ENCODE measurements at regions of chr17 and their contacts with region 1.

Region 1: DNA sequence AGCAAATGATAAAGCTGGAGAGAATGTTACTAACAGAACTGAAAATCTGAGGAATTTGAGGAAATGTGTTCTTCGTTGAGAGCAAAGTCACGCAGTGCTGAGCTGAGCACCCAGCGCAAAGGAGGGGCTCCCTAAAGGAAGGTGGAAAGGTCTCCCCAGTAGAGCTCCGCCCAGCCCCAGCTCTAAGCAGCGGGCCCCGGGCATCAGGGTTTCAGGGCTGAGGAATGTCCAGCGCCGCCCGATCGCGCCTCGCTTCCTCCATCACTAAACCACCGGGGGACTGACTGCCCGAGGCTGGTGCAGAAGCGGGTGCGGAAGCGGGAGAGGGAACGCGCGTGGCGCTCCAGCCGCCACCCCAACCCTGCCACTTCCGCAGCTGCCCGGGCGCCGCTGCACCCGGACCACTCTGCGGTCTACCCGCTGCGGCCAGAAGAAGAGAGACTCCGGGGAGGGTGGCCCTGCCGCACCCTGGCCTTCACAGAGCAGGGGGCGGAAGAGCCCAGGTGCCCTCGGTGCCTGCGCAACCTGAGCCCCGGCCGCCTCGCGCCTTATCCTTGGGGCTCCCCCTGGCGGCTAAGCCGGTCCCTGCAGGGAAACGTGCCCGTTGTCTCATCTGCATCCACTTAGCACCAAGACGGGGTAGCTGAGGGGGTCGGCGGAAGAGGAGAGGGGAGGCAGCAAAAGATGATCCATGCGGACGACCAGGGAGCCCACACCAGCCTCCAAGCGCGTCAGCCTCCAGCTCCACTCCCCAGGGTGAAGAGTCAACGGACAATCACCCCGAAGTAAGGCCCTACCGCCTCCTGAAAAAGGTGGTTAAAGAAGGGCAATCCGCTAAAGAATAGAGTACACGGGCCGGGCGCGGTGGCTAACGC is 12.4 kb upstream of the GUCY2D start:
- DNase-seq: peak; percentile 84
- H3K27ac ChIP-seq: peak overlapping the region; percentile 57
- CTCF ChIP-seq: peak; percentile 94

Region 2: DNA sequence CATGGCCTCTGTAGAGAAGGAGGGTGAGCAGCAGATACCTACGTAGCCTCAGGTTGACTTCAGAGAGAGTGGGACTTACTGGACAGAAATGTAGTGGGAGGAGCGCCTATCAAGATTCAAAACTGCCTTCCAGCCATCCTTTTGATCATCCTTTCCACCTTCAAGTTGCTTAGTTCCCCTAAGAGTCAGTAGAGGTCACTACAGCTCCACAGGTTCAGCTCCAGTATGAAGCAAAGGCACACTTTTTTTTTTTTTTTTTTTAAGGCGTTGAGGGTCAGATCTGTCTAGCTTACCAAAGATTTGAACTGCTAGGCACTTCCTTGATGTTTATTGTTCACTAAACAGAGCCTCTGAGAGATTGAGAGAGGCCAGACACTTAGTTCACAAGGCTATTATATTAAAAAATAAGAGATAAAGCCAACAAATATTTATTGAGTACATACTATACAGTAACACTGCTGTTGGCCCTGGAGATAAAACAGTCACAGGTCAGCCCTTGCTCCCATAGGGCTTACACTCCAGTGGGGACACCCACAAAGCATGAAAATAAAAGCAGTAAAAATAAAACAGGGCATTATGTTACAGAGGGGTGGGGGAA is 77.0 kb before region 1 on chr17:
- CTCF ChIA-PET with region 1: interaction called, 31 read pairs
- POLR2A ChIA-PET with region 1: interaction called, 4 read pairs
- DNase-seq: peak; percentile 61
- H3K27ac ChIP-seq: no peak overlapping the region
- CTCF ChIP-seq: peak; percentile 79

Region 3: GRCh38 chr17:7931709-7932482 is 58.1 kb before region 1 on chr17 and contains the starts of genes CNTROB and TRAPPC1:
- CTCF ChIA-PET with region 1: interaction called, 22 read pairs
- POLR2A ChIA-PET with region 1: interaction called, 4 read pairs
- DNase-seq: peak; percentile 99
- H3K27ac ChIP-seq: peak within 1 kb of the TSS; percentile 80
- CTCF ChIP-seq: no peak

Region 4: GRCh38 chr17:7977805-7978204 is 12.2 kb before region 1 on chr17:
- CTCF ChIA-PET with region 1: interaction called, 11 read pairs
- POLR2A ChIA-PET with region 1: no interaction called
- DNase-seq: no peak
- H3K27ac ChIP-seq: no peak overlapping the region
- CTCF ChIP-seq: no peak

Region 5: DNA sequence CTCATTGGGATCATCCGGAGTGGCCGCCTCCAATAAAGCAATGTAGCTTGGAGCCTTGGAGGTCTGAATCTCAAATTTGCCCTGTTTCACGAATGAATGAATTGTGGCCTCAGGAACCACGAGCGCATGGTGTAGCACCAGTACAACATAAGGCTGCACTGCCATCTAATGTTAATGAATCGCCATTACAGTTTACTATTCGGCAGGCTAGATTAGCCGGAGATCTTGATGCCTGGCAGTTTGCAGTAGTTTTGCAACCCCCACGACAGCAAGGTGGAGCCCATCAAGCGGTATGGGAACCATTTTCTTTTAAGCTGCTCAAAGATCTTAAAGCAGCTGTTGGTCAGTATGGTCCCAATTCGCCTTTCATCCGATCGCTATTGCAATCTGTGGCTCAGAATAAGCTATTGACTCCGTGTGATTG is 67.7 kb after region 1 on chr17:
- CTCF ChIA-PET with region 1: interaction called, 12 read pairs
- POLR2A ChIA-PET with region 1: no interaction called
- DNase-seq: peak; percentile 82
- H3K27ac ChIP-seq: no peak overlapping the region
- CTCF ChIP-seq: peak; percentile 77

Region 6: GRCh38 chr17:8138672-8139371 is 148.8 kb after region 1 on chr17:
- CTCF ChIA-PET with region 1: no interaction called
- POLR2A ChIA-PET with region 1: no interaction called
- DNase-seq: peak; percentile 84
- H3K27ac ChIP-seq: peak overlapping the region; percentile 98
- CTCF ChIP-seq: peak; percentile 90

Region 7: DNA sequence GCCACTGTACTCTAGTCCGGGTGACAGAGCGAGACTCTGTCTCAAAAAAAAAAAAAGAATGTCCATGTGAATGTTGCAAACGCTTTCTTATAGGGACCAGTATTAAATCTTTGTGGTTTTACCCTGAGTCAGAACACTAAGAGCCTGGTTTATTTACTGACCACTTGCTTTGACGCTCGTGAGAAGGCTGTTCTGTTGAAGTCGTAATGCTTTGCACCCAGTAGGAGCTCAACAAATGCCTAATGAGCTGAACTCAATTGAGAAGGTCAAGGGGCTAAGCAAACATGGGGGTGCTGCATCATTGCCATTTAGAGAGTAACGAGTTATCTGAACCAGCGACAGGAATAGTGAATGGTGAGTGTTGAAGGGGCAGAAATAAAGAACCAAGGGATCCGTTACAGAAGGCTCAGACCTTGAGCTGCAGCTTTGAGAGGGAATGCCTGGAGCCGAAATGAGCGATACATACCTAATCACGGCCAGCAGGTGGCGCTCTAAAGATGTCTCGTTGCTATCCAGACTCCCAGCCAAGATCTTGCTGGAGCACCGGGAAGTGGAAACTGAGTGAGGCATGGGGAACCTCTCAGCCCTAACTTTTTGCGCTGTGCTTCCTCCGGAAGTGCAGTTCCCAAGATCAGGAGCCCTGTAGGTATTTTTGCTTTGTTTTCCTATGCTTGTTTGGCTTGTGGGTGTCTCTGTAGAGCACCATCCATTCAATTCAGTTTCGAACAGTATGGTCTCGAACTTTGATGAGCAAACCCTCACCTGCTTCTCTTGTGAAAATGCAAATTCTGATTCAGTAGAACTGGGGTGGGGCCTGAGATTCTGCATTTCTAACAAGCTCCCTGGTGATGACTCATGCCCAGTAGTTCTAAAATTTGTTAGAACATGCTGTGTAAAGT is 420.2 kb after region 1 on chr17:
- CTCF ChIA-PET with region 1: no interaction called
- POLR2A ChIA-PET with region 1: no interaction called
- DNase-seq: peak; percentile 67
- H3K27ac ChIP-seq: 0 out of 2 replicates have a peak overlapping the region, but pooled peaks have one; percentile 32
- CTCF ChIP-seq: peak; percentile 79

Measured in RWPE1 (cell line).